Activated T-helper 2 cell treated with anti-CD3 and anti-CD28 coated beads, Interferon-gamma antibody, Interleukin-2, Interleukin-4, amounts not matched to agents 10 μg/mL and 5 μg/mL and 100 μg/mL, durations not matched to agents 14 hours and 24 hours and 36 hours (primary cell): ENCODE measurements at regions of chr9 and their contacts with region 1.

Region 1: GRCh38 chr9:36036780-36037548 is at the start of gene RECK:
- DNase-seq: peak; percentile 83
- H3K4me3 Mint-ChIP-seq: peak within 1 kb of the TSS; percentile 92
- H3K27ac Mint-ChIP-seq: peak within 1 kb of the TSS; percentile 67
- H3K4me1 Mint-ChIP-seq: peaks cover 35% of the 10 kb centered on the region
- H3K27me3 Mint-ChIP-seq: peaks cover 15% of the 10 kb centered on the region
- total RNA-seq, gene RECK: 5.3 and 5.9 TPM in 2 replicates

Region 2: GRCh38 chr9:36008774-36009300 is 28.1 kb before region 1 on chr9:
- intact Hi-C with region 1: loop called (anchors 2 kb)
- DNase-seq: peak; percentile 57
- H3K4me3 Mint-ChIP-seq: no peak overlapping the region
- H3K27ac Mint-ChIP-seq: no peak overlapping the region
- H3K4me1 Mint-ChIP-seq: peaks cover 19% of the 10 kb centered on the region
- H3K27me3 Mint-ChIP-seq: peaks cover 35% of the 10 kb centered on the region

Region 3: DNA sequence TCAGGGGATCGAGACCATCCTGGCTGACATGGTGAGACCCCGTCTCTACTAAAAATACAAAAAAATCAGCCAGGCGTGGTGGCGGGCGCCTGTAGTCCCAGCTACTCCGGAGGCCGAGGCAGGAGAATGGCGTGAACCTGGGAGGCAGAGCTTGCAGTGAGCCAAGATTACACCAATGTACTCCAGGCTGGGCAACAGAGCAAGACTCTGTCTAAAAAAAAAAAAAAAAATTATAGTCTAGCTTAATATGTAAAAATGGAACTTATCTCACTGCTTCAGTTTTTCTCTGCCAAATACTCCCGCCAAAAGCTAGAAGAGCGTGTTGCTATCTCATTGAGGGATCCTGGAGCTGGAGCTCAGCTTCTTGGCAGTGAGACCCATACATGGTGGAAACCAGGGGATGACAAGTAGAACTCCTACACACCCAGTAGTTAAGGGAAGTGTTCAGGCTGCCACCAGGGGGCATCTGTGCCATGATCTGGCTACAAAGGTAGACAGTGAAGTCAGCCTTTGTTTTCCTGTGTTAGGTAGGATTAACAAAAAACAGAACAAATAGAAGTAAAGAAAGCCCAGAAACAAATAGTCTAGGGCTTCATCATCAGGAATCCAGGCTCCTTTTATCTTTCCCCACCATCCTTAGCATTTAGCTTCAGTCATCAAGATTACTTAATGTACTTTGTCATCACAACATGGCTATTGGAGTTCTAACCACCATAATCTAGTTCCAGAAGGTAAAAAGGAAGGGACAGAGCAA is 66.0 kb after region 1 on chr9:
- intact Hi-C with region 1: no loop called
- DNase-seq: peak; percentile 75
- H3K4me3 Mint-ChIP-seq: no peak overlapping the region
- H3K27ac Mint-ChIP-seq: no peak overlapping the region
- H3K4me1 Mint-ChIP-seq: peaks cover 7% of the 10 kb centered on the region
- H3K27me3 Mint-ChIP-seq: no peaks in the 10 kb centered on the region

Region 4: DNA sequence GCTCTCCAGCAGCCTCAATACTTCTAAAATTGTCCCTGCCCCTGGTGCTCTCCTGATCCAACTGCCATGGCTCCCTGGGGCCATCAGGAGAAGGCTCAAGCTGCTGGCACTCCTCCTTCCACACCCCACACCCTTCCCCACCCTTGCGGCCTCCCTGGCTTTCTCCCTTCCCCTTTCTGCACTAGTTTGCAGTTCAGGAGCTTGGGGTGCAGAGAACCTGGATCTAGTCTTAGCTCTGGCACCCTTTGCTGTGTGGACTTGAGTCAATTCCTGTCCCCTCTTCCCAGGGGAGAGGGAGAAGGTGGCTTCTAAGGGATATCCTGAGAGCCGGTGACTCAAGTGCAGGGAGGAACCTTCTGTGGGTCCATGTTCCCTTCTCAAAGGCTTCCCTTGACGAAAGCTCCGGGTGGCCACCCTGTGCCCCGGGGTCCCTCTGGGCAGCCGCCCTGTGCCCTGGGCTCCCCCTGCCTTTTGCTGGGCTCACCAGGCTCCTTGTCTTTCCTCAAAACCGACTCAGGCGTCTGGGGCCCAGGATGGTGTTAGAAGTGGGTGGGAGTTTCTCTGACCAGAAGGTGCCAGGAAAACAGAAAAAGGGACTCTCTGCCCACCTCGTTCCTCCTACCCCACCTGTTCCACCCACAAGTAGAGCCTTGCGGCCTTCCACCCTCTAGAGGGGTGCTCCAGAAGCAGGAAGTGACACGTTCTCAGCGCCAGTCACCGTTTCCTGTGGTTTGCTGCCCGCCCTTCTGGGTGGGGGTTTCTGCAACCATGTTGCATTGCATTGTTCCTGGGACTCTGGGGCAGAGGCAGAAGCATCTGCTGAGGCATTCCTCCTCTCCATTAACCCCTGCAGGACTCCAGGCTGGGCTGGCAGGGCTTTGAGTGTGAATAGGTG is 114.6 kb after region 1 on chr9:
- intact Hi-C with region 1: loop called (anchors 5 kb)
- DNase-seq: peak; percentile 83
- H3K4me3 Mint-ChIP-seq: peak overlapping the region; percentile 71
- H3K27ac Mint-ChIP-seq: peak overlapping the region; percentile 90
- H3K4me1 Mint-ChIP-seq: peaks cover 59% of the 10 kb centered on the region
- H3K27me3 Mint-ChIP-seq: no peaks in the 10 kb centered on the region